AG04449 (cell line): ENCODE measurements at regions of chr2 and their contacts with region 1.

Region 1: DNA sequence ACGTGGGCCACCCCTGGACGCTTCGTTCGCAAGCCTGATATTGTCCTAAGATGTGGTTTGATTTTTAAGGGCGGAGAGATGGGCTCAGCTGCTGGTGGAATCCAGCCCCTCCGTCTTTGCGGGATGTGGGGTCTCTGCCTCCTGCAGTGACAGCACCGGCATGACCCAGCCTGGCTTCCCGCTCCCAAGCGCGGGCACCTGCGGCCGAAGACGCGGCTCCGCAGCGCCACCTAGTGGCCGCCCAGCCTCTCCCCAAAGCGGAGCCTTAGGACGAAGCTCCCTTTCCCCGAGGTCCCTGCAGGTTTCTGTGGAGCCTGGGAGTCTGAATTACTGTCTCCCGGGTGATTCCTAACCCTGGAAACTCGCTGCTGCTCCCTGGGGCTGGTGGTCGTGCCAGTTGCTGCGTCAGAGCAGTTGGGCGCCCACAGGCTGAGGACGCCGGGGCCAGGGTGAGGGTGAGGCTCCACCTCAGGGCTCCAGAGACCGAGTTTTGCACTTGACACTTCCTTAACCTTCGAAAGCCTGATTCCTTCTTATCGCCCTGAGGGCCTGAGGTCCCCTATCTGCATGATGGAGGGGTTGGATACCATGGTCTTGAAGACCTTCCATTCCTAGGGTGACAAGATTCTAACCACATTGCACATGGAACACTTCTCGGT is 137.5 kb downstream of the TPO start:
- DNase-seq: no peak
- H3K4me3 ChIP-seq: no peak overlapping the region; the same call in 1 of the 2 replicates
- CTCF ChIP-seq: peak; percentile 98

Region 2: DNA sequence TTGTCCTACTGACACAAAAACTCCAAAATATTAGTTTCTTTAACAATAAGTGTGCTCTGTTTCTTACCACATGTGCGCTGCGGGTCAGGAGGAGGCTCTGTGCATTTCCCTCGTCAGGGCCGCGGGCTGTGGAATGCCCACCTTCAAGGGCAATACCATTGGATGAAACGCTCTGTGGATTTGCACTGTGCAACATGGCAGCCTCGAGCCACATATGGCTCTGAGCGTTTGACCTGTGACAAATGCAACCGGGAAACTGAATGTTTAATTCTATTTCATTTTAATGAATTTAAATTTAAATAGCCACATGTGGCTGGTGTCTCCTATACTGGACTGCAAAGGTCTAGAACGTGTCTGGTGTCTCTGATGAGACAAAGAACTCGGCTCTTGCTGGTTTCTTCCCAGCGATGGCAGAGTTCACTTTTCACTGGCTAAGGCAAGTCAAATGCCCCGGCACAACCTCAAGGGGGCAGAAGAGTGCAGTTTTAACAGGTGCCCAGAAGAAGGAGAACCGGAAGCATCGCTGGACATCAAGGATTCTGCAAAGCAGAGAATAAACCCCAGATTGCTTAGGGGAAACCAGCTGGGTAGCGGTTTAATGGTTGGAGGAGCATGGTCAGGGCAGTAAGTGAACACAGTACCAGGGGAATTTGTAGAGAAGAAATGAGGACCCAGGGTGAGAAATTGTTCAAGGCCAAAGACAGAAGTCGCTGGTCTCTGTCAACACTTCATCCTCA is 836.6 kb before region 1 on chr2:
- CTCF ChIA-PET with region 1: interaction called, 198 read pairs
- POLR2A ChIA-PET with region 1: no interaction called
- DNase-seq: no peak
- H3K4me3 ChIP-seq: no peak overlapping the region
- CTCF ChIP-seq: peak; percentile 83

Region 3: DNA sequence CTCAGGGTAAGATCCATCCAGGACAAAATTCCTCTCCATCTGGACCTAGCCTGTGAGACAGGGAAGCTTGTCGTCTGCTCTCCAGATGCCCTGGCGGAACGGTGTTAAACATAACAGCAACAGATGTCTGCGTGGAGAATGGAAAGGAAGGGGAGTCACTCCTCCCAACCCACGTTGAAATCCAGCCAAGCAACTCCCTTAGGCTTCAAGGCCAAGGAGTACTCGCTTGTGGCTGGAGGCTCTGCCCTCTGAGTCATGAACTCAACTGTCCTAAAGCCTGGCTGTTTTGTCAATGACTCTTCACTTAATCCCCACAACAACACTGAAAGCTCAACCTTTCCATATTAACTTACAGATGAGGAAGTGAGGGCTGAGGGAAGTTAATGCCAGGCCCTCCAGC is 95.3 kb before region 1 on chr2:
- CTCF ChIA-PET with region 1: no interaction called
- POLR2A ChIA-PET with region 1: no interaction called
- DNase-seq: peak; percentile 3
- H3K4me3 ChIP-seq: no peak overlapping the region
- CTCF ChIP-seq: no peak

Region 4: DNA sequence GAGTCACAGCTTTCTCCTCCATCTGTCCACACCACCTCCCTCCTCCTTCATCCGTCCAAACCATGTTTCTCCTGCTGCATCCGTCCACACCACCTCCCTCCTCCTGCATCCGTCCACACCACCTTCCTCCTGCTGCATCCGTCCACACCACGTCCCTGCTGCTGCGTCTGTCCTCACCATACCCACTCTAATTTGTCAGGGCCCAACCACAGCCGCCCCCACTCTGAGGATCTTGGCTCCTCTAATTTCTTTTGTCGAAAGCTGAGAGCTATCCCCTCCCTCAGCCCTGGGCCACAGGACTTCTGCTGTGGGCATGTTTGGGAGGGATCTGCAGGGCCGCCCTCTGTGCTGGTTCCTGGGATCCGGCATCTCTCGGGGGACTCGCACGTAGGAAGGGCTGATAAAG is 70.1 kb before region 1 on chr2:
- CTCF ChIA-PET with region 1: no interaction called
- POLR2A ChIA-PET with region 1: no interaction called
- DNase-seq: no peak
- H3K4me3 ChIP-seq: no peak overlapping the region
- CTCF ChIP-seq: no peak

Region 5: DNA sequence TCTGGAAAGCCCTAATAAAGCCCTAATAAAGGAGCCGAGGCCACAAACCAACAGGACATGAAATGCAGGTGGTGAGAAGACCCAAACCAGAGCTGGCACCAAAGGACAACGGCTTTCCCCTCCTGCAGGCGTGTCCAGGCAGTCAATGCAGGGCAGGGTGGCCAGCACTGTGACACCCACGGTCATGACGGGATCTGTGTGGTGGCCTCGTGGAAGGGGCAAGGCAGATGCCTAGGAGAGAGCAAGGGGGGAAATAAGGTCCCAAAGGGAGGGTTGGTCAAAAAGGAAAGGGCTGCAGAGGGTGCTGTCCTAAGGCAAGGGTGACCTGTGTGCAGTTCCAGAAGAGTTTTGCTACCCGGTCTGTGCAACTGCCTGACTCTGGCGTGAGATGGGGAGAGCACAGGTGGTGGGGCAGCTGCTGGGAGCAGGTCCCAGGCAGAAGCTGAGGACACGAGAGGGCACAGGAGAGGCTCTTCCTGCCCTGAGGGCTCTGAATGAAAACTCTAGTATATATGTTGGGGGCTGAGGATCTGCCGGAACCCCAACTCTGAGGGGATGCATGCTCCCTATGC is 19.2 kb after region 1 on chr2:
- CTCF ChIA-PET with region 1: interaction called, 40 read pairs
- POLR2A ChIA-PET with region 1: no interaction called
- DNase-seq: no peak
- H3K4me3 ChIP-seq: no peak overlapping the region
- CTCF ChIP-seq: no peak

Region 6: GRCh38 chr2:1645761-1646476 is 95.1 kb after region 1 on chr2:
- CTCF ChIA-PET with region 1: interaction called, 10 read pairs
- POLR2A ChIA-PET with region 1: no interaction called
- DNase-seq: no peak
- H3K4me3 ChIP-seq: no peak overlapping the region
- CTCF ChIP-seq: no peak

Region 7: DNA sequence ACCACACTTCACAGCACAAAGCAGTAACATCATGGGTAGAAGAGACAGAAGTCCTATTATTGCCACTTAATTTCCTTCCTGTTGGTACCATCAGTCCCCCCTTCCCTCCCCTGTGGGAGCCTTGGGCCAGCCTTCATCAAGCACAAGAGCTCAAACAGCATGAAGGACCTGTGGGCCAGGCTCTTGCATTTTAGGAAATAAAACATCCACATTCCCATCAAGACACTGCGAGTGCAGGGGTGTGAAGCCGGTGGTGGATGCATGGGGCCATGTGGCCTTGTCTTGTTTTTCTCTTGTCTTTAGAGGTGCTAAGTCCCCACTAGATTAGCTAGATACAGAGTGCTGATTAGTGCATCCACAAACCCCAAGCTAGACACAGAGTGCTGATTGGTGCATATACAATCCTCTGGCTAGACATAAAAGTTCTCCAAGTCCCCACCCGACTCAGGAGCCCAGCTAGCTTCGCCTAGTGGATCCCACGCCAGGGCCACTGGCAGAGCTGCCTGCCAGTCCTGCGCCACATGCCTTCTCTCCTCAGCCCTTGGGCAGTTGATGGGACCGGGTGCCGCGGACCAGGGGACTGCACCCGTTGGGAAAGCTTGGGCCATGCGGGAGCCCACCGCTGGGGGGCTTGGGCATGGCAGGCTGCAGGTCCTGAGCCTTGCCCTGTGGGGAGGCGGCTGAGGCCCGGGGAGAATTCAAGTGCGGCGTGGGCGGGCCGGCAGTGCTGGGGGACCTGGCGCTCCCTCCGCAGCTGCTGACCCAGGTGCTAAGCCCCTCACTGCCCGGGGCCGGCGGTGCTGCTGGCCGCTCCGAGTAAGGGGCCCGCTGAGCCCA is 208.2 kb after region 1 on chr2:
- CTCF ChIA-PET with region 1: interaction called, 19 read pairs
- POLR2A ChIA-PET with region 1: no interaction called
- DNase-seq: no peak
- H3K4me3 ChIP-seq: no peak overlapping the region
- CTCF ChIP-seq: no peak

Region 8: GRCh38 chr2:1817256-1818051 is 266.7 kb after region 1 on chr2:
- CTCF ChIA-PET with region 1: interaction called, 104 read pairs
- POLR2A ChIA-PET with region 1: interaction called, 3 read pairs
- DNase-seq: peak; percentile 95
- H3K4me3 ChIP-seq: peak overlapping the region; percentile 25; the same call in 1 of the 2 replicates
- CTCF ChIP-seq: peak; percentile 99